ENCODE measurements at regions of chr15 and their contacts with region 1.

Region 1: GRCh38 chr15:60444289-60444912 is 34.5 kb downstream of the ICE2 start:
- DNase-seq: peak; percentile 30 to 50
- ATAC-seq: peak in 1 of 2 experiments; percentile 58; a peak in 4 of 6 replicates
- H3K4me3 ChIP-seq: no peak overlapping the region
- H3K27ac ChIP-seq: peak overlapping the region; percentile 32 to 59; a peak in 4 of 6 replicates
- H3K4me1 ChIP-seq: peaks cover 58% of the 10 kb centered on the region
- CTCF ChIP-seq: peak; percentile 92
- EP300 ChIP-seq: no peak
- POLR2A ChIP-seq: no peak
- RAD21 ChIP-seq: peak; percentile 85 to 91

Region 2: DNA sequence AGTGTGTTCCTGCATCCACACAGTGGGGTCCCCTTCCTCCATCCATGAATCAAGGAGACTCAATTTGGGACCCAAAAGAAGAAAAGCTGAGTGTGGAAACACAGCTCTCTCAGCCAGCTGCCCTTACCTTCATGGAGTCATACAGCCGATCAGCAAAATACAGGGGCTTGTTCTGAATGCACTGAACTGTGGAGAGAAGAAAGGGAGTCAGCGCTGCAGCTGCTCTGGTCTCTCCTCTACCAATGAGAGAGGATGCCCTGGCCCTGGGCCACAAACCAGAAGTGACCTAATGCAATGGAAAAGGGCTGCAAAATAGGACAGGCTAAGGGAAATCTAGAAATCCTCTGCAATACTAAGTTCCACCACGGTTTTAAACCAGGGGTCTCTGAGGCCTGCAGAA is 93.3 kb before region 1 on chr15:
- CTCF ChIA-PET with region 1: interaction called, 17 read pairs
- POLR2A ChIA-PET with region 1: interaction called, 3 read pairs
- DNase-seq: peak in 1 of 2 experiments; percentile 28
- ATAC-seq: peak; percentile 40 to 46
- H3K4me3 ChIP-seq: no peak overlapping the region
- H3K27ac ChIP-seq: peak overlapping the region in 1 of 2 experiments; percentile 58; a peak in 2 of 6 replicates
- H3K4me1 ChIP-seq: peaks cover 99% of the 10 kb centered on the region
- CTCF ChIP-seq: no peak
- EP300 ChIP-seq: no peak
- POLR2A ChIP-seq: no peak
- RAD21 ChIP-seq: no peak

Region 3: GRCh38 chr15:60397772-60398445 is 46.5 kb before region 1 on chr15 and contains the start of gene ANXA2:
- CTCF ChIA-PET with region 1: interaction called, 49 read pairs
- POLR2A ChIA-PET with region 1: interaction called, 12 read pairs
- DNase-seq: peak; percentile 84 to 95
- ATAC-seq: peak; percentile 62 to 72
- H3K4me3 ChIP-seq: peak within 1 kb of the TSS; percentile 88
- H3K27ac ChIP-seq: peak within 1 kb of the TSS; percentile 97 to 99
- H3K4me1 ChIP-seq: peaks cover 59% of the 10 kb centered on the region
- CTCF ChIP-seq: no peak
- EP300 ChIP-seq: peak in 1 of 2 experiments; percentile 37; a peak in 1 of 5 replicates
- POLR2A ChIP-seq: peak; percentile 92
- RAD21 ChIP-seq: no peak
- polyA plus RNA-seq, gene ANXA2: 5,725 and 5,746 TPM in 2 replicates

Region 4: GRCh38 chr15:60408438-60409105 is 35.8 kb before region 1 on chr15:
- CTCF ChIA-PET with region 1: interaction called, 20 read pairs
- POLR2A ChIA-PET with region 1: interaction called, 4 read pairs
- DNase-seq: peak; percentile 86 to 92
- ATAC-seq: peak; percentile 81 to 85
- H3K4me3 ChIP-seq: no peak overlapping the region
- H3K27ac ChIP-seq: peak overlapping the region; percentile 90
- H3K4me1 ChIP-seq: peaks cover 59% of the 10 kb centered on the region
- CTCF ChIP-seq: no peak
- EP300 ChIP-seq: peak; percentile 82 to 90; a peak in 3 of 5 replicates
- POLR2A ChIP-seq: no peak
- RAD21 ChIP-seq: peak in 1 of 2 experiments; percentile 29; a peak in 3 of 5 replicates

Region 5: DNA sequence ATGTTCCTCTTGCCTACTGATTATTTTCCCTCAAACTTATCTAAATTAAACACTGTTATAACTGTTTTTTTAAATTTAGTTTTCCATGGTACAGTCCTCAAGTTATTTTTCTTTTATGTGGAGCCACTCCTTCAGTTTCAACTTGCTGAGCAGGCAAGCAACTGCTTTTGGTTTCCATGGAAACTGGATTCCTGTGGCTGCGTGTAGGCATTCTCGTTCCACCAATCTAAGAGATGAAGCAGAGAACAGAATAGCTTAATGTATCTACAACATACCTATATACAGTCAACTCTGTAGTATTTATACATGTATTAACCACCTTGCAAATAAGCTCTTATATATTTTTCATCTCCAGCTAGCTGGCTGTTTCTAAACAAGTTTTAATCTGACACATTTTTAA is 20.9 kb before region 1 on chr15:
- CTCF ChIA-PET with region 1: interaction called, 41 read pairs
- POLR2A ChIA-PET with region 1: no interaction called
- DNase-seq: peak; percentile 29 to 80
- ATAC-seq: peak; percentile 77 to 81; a peak in 4 of 6 replicates
- H3K4me3 ChIP-seq: no peak overlapping the region
- H3K27ac ChIP-seq: peak overlapping the region; percentile 2 to 62; a peak in 2 of 6 replicates
- H3K4me1 ChIP-seq: peaks cover 73% of the 10 kb centered on the region
- CTCF ChIP-seq: no peak
- EP300 ChIP-seq: no peak
- POLR2A ChIP-seq: no peak
- RAD21 ChIP-seq: no peak

Region 6: GRCh38 chr15:60454824-60455223 is 10.4 kb after region 1 on chr15:
- CTCF ChIA-PET with region 1: interaction called, 15 read pairs
- POLR2A ChIA-PET with region 1: no interaction called
- DNase-seq: no peak
- ATAC-seq: no peak
- H3K4me3 ChIP-seq: no peak overlapping the region
- H3K27ac ChIP-seq: no peak overlapping the region
- H3K4me1 ChIP-seq: peaks cover 18% of the 10 kb centered on the region
- CTCF ChIP-seq: no peak
- EP300 ChIP-seq: no peak
- POLR2A ChIP-seq: no peak
- RAD21 ChIP-seq: no peak

Measured in A549 (cell line).